ENCODE measurements at regions of chr15 and their contacts with region 1.

Region 1: DNA sequence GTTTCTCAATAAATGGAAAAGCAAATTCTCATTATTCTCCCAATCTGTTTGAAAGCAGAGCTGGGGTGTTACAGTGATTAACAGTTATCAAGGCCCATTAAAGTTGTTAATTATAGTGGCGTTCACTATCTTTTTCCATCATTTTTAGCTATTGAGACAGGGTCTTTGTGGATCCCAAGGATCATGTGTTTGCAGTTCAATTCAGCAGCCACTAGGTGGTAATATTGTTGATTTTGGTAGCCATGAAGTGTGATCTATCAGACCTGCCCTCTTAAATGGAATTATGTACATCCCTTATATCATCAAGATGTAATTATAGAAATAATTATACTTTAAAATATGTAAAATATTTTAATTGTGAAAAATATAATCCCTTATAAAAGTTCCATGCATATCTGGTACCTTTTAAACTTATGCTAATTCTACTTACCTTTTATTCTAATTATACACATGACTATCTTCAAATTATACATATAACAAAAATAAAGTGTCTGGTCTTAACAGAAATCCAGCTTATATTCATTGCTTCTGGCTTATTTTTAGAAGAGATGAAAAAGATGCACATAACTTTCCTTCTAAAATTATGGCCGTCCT is 126.4 kb downstream of the GREM1 start:
- DNase-seq: peak; percentile 50
- H3K4me3 Mint-ChIP-seq: no peak overlapping the region
- H3K27ac Mint-ChIP-seq: no peak overlapping the region
- H3K4me1 Mint-ChIP-seq: no peaks in the 10 kb centered on the region
- H3K27me3 Mint-ChIP-seq: no peaks in the 10 kb centered on the region
- CTCF ChIP-seq: peak; percentile 61

Region 2: DNA sequence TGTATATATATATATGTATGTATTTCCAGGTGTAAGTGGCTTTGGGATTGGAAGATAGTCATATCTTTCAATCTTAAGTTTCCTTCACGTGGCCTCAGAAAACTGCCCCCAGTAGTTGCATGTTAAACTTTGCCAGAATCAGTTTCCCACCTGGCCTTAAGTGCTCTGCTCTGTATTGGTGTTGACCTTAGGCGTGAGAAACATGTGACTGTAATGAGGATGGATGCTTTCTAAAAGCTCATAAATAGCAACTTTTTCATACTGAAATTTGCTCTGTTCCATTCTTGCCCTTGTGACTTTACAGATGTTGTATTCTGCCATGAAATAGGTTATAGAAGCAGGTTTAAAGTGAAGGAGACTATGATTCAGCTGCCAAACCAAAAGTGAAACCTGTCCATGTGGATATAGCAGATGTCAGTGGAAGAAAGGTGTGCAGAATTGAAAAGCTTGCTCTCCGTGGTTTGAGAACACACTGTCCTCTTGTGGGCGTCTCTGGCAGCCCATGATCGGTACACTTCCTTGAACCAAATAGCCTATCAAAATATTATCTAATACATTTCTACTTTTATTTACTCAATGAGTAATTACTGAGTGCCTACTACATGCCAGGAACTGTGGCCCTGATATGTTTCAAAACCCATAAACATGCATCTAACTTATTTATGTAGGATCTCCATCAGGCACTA is 186.9 kb before region 1 on chr15:
- CTCF ChIA-PET with region 1: interaction called, 63 read pairs
- POLR2A ChIA-PET with region 1: interaction called, 5 read pairs
- intact Hi-C with region 1: loop called (anchors 2 kb)
- DNase-seq: peak; percentile 38
- H3K4me3 Mint-ChIP-seq: peak overlapping the region; percentile 51
- H3K27ac Mint-ChIP-seq: peak overlapping the region; percentile 39
- H3K4me1 Mint-ChIP-seq: peaks cover 28% of the 10 kb centered on the region
- H3K27me3 Mint-ChIP-seq: no peaks in the 10 kb centered on the region
- CTCF ChIP-seq: peak; percentile 6

Region 3: GRCh38 chr15:32824777-32825176 is 19.4 kb before region 1 on chr15:
- CTCF ChIA-PET with region 1: interaction called, 11 read pairs
- POLR2A ChIA-PET with region 1: no interaction called
- intact Hi-C with region 1: no loop called
- DNase-seq: peak; percentile 67
- H3K4me3 Mint-ChIP-seq: peak overlapping the region; percentile 0
- H3K27ac Mint-ChIP-seq: peak overlapping the region; percentile 21
- H3K4me1 Mint-ChIP-seq: peaks cover 16% of the 10 kb centered on the region
- H3K27me3 Mint-ChIP-seq: no peaks in the 10 kb centered on the region
- CTCF ChIP-seq: no peak

Region 4: DNA sequence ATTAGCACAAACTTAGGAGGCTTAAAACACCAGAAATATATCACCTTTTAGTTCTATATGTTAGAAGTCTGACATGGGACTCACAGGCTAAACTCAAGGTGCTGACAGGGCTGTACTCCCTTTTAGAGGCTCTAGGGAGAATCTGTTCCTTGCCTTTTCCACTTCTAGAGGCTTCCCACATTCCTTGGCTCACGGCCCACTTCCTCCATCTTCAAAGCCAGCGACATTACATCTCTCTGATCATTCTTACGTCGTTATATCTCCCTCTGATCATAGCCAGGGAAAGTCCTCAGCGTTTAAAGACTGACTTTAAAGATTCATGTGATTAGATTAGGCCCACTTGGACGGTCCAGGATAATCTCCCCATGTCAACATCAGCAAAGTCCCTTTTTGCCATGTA is 39.9 kb after region 1 on chr15:
- CTCF ChIA-PET with region 1: interaction called, 4 read pairs
- POLR2A ChIA-PET with region 1: interaction called, 3 read pairs
- intact Hi-C with region 1: loop called (anchors 5 kb)
- DNase-seq: no peak
- H3K4me3 Mint-ChIP-seq: no peak overlapping the region
- H3K27ac Mint-ChIP-seq: no peak overlapping the region
- H3K4me1 Mint-ChIP-seq: no peaks in the 10 kb centered on the region
- H3K27me3 Mint-ChIP-seq: no peaks in the 10 kb centered on the region
- CTCF ChIP-seq: no peak

Region 5: DNA sequence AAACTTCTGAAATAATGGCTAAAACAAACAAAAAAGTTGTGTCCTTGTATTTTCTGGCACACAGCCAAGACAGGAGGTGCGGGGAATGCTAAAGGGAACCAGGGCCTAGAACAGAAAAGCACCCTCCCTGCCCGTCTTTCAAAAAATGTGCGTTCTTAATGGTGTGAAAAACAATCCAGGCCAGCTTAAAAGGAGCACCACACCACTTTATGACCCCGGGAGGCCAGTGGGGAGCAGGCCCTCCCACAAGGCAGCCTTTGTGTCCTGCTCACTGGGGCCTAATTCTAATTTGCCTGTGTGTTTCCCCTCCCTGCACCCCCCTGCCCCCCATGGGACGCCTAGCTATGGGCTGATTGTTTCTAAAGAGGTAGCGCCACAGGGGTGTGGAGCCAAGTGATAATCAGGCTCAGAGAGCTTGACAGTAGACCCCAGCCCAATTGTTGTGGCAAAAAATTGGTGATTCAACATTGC is 54.9 kb after region 1 on chr15:
- CTCF ChIA-PET with region 1: no interaction called
- POLR2A ChIA-PET with region 1: no interaction called
- intact Hi-C with region 1: no loop called
- DNase-seq: peak; percentile 3
- H3K4me3 Mint-ChIP-seq: no peak overlapping the region
- H3K27ac Mint-ChIP-seq: no peak overlapping the region
- H3K4me1 Mint-ChIP-seq: no peaks in the 10 kb centered on the region
- H3K27me3 Mint-ChIP-seq: no peaks in the 10 kb centered on the region
- CTCF ChIP-seq: no peak

Region 6: GRCh38 chr15:32956006-32956405 is 111.8 kb after region 1 on chr15:
- CTCF ChIA-PET with region 1: interaction called, 58 read pairs
- POLR2A ChIA-PET with region 1: interaction called, 3 read pairs
- intact Hi-C with region 1: loop called (anchors 1 kb)
- DNase-seq: peak; percentile 60
- H3K4me3 Mint-ChIP-seq: no peak overlapping the region
- H3K27ac Mint-ChIP-seq: no peak overlapping the region
- H3K4me1 Mint-ChIP-seq: peaks cover 8% of the 10 kb centered on the region
- H3K27me3 Mint-ChIP-seq: no peaks in the 10 kb centered on the region
- CTCF ChIP-seq: peak; percentile 38